GM10248 (cell line): ENCODE measurements at regions of chr2 and their contacts with region 1.

Region 1: GRCh38 chr2:217086038-217086522 is 226.2 kb upstream of the TNP1 start:
- DNase-seq: peak; percentile 29
- CTCF ChIP-seq: no peak

Region 2: DNA sequence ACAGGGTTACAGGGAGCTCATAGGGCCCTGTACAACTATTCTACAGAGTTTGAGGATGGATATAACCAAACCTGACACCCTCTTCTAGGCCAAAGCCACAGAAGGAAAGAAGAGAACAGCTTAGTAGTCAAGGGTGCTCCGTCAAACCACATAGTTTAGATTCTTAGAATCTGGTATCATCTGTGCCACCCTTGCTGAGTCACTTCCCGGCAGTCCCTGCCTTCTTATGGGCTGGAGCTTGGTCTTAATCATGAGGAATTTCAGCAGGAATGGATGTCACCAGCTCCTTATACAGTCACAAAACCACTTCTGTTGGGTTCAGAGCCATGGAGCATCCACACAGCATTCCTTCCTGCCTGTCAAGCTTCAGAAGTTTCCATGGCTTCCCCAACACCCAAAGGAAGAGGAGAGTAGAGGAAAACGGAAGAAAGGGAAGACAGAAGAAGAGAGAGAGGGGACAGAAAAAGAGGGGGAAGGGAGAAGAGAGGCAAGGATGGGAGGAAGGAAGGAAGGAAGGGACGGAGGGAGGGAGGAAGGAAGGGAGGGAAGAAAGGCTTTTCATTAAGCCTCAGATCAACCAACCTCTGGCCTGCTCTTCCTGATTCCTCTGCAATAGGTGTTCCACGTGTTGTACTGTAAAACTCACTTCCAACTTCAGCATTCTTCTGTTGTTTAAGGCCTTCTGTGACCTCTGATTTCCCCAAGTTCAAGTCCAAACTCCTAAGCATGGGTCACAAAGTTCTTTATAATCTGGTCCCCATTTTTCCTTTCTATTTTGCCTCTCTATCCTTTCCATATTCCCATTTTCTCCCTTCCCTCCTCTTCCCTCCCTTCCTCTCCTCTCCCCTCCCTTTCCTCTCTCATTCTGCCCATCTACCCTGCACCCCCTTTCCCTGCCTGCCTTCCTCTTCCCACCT is 19.9 kb after region 1 on chr2:
- CTCF ChIA-PET with region 1: interaction called, 11 read pairs
- POLR2A ChIA-PET with region 1: no interaction called
- DNase-seq: no peak
- CTCF ChIP-seq: no peak